PC-3 (cell line): ENCODE measurements at regions of chr4 and their contacts with region 1.

Region 1: GRCh38 chr4:187268940-187269339 is 545.3 kb upstream of the FAT1 start:
- DNase-seq: peak; percentile 65
- ATAC-seq: peak; percentile 88
- H3K4me3 ChIP-seq: no peak overlapping the region
- H3K27ac ChIP-seq: peak overlapping the region; percentile 13; the same call in 1 of the 2 replicates
- H3K4me1 ChIP-seq: peaks cover 16% of the 10 kb centered on the region
- H3K27me3 ChIP-seq: no peaks in the 10 kb centered on the region
- CTCF ChIP-seq: no peak

Region 2: GRCh38 chr4:186946682-186947294 is 322.2 kb before region 1 on chr4:
- CTCF ChIA-PET with region 1: no interaction called
- POLR2A ChIA-PET with region 1: no interaction called
- intact Hi-C with region 1: loop called (anchors 10 kb)
- DNase-seq: peak; percentile 81
- ATAC-seq: peak; percentile 100
- H3K4me3 ChIP-seq: no peak overlapping the region
- H3K27ac ChIP-seq: no peak overlapping the region
- H3K4me1 ChIP-seq: no peaks in the 10 kb centered on the region
- H3K27me3 ChIP-seq: no peaks in the 10 kb centered on the region
- CTCF ChIP-seq: peak; percentile 75

Region 3: GRCh38 chr4:187218705-187219245 is 50.2 kb before region 1 on chr4:
- CTCF ChIA-PET with region 1: no interaction called
- POLR2A ChIA-PET with region 1: no interaction called
- intact Hi-C with region 1: no loop called
- DNase-seq: no peak
- ATAC-seq: no peak
- H3K4me3 ChIP-seq: no peak overlapping the region
- H3K27ac ChIP-seq: no peak overlapping the region
- H3K4me1 ChIP-seq: no peaks in the 10 kb centered on the region
- H3K27me3 ChIP-seq: no peaks in the 10 kb centered on the region
- CTCF ChIP-seq: no peak

Region 4: GRCh38 chr4:187309456-187309855 is 40.5 kb after region 1 on chr4:
- CTCF ChIA-PET with region 1: no interaction called
- POLR2A ChIA-PET with region 1: no interaction called
- intact Hi-C with region 1: loop called (anchors 5 kb)
- DNase-seq: peak; percentile 80
- ATAC-seq: peak; percentile 87
- H3K4me3 ChIP-seq: no peak overlapping the region
- H3K27ac ChIP-seq: peak overlapping the region; percentile 52
- H3K4me1 ChIP-seq: peaks cover 38% of the 10 kb centered on the region
- H3K27me3 ChIP-seq: no peaks in the 10 kb centered on the region
- CTCF ChIP-seq: no peak

Region 5: GRCh38 chr4:187415231-187415630 is 146.3 kb after region 1 on chr4:
- CTCF ChIA-PET with region 1: no interaction called
- POLR2A ChIA-PET with region 1: no interaction called
- intact Hi-C with region 1: loop called (anchors 5 kb)
- DNase-seq: no peak
- ATAC-seq: no peak
- H3K4me3 ChIP-seq: no peak overlapping the region
- H3K27ac ChIP-seq: no peak overlapping the region
- H3K4me1 ChIP-seq: no peaks in the 10 kb centered on the region
- H3K27me3 ChIP-seq: no peaks in the 10 kb centered on the region
- CTCF ChIP-seq: no peak

Region 6: DNA sequence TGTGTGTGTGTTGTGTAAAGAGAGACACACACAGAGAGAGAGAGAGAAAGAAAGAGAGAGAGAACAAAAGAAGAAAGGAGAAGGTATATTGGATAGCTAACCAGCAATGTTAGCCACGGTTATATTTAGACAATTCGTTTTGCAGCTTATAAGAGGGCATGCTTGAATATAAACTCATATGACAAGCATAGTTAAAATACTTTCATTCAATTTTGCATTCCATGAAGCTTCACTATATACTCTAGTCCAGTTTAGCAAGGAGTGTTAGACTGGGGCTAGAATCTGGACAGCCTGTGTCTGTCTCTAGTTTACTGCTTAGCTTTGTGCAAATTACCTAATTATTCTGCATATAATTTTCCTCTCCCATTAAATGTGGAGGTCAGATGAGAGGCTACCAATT is 200.7 kb after region 1 on chr4:
- CTCF ChIA-PET with region 1: no interaction called
- POLR2A ChIA-PET with region 1: no interaction called
- intact Hi-C with region 1: no loop called
- DNase-seq: no peak
- ATAC-seq: no peak
- H3K4me3 ChIP-seq: no peak overlapping the region
- H3K27ac ChIP-seq: no peak overlapping the region
- H3K4me1 ChIP-seq: no peaks in the 10 kb centered on the region
- H3K27me3 ChIP-seq: no peaks in the 10 kb centered on the region
- CTCF ChIP-seq: no peak